AG04449 (cell line): ENCODE measurements at regions of chr2 and their contacts with region 1.

Region 1: DNA sequence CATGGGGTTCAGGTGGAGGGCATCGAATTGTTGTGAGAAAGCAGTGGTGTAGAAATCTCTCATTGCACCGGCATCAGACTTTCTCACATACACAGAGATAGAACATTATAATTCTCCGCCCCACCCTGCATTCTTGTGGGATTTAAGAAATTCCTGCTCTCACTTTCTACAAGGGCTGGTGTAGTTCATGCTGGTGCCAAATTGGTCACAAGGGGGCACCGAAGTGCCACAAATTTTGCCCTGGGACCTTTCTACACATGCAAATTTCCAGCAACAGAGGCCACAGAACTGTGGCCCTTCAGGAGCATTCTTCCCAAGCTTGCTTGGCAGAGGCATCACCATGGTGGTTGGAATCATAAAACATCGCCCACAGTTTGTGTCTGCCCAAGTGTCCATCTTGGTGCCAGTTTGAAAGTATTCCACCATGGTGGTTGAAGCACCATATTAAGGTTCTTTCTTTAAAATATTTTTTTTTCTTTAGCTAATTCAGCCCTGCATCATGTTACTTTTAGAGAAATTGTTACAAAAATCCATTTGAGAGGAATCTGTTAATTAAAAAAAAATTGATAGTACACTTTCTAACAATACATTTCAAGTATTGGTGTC is 521.2 kb upstream of the FANCL start:
- DNase-seq: peak; percentile 23
- H3K4me3 ChIP-seq: no peak overlapping the region
- CTCF ChIP-seq: peak; percentile 66

Region 2: GRCh38 chr2:58584606-58585118 is 177.6 kb before region 1 on chr2:
- CTCF ChIA-PET with region 1: no interaction called
- POLR2A ChIA-PET with region 1: no interaction called
- DNase-seq: no peak
- H3K4me3 ChIP-seq: no peak overlapping the region
- CTCF ChIP-seq: no peak

Region 3: DNA sequence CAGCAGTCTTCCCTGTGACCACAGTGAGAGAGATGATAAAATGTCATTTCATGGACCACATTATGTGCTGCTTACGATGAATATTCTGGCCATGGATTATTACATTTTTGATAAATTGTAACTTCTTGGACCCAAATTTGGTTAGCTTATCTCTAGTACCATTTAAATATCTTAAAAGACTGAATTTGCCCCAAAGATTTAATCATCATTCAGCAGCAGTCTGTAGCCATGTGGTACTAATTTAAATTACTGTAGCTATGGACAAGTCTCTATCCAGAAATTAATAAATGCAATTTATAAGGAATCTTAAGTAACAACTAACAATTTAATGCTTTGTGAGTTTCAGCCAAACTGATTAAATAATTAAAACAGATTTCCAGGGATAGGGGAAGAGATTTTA is 123.7 kb after region 1 on chr2:
- CTCF ChIA-PET with region 1: no interaction called
- POLR2A ChIA-PET with region 1: no interaction called
- DNase-seq: no peak
- H3K4me3 ChIP-seq: no peak overlapping the region
- CTCF ChIP-seq: no peak

Region 4: GRCh38 chr2:59182249-59182648 is 420.0 kb after region 1 on chr2:
- CTCF ChIA-PET with region 1: interaction called, 18 read pairs
- POLR2A ChIA-PET with region 1: no interaction called
- DNase-seq: no peak
- H3K4me3 ChIP-seq: no peak overlapping the region
- CTCF ChIP-seq: peak; percentile 60